Endothelial cell of umbilical vein (primary cell): ENCODE measurements at regions of chr2 and their contacts with region 1.

Region 1: GRCh38 chr2:174748948-174749347 is 15.3 kb downstream of the CHRNA1 start:
- DNase-seq: peak; percentile 66
- H3K4me3 ChIP-seq: no peak overlapping the region
- H3K27ac ChIP-seq: no peak overlapping the region
- H3K4me1 ChIP-seq: no peaks in the 10 kb centered on the region
- H3K27me3 ChIP-seq: peaks cover 0 to 2% of the 10 kb centered on the region in 2 experiments
- CTCF ChIP-seq: peak; percentile 67 to 74
- POLR2A ChIP-seq: no peak

Region 2: GRCh38 chr2:174450021-174450816 is 298.7 kb before region 1 on chr2:
- CTCF ChIA-PET with region 1: no interaction called
- POLR2A ChIA-PET with region 1: no interaction called
- dilution Hi-C with region 1: no loop called
- intact Hi-C with region 1: no loop called
- DNase-seq: peak; percentile 20
- H3K4me3 ChIP-seq: no peak overlapping the region
- H3K27ac ChIP-seq: no peak overlapping the region
- H3K4me1 ChIP-seq: no peaks in the 10 kb centered on the region
- H3K27me3 ChIP-seq: no peaks in the 10 kb centered on the region
- CTCF ChIP-seq: no peak
- POLR2A ChIP-seq: no peak

Region 3: GRCh38 chr2:174738841-174739240 is 10.1 kb before region 1 on chr2:
- CTCF ChIA-PET with region 1: interaction called, 32 read pairs
- POLR2A ChIA-PET with region 1: no interaction called
- dilution Hi-C with region 1: no loop called
- intact Hi-C with region 1: no loop called
- DNase-seq: no peak
- H3K4me3 ChIP-seq: no peak overlapping the region
- H3K27ac ChIP-seq: no peak overlapping the region
- H3K4me1 ChIP-seq: no peaks in the 10 kb centered on the region
- H3K27me3 ChIP-seq: peaks cover 12 to 17% of the 10 kb centered on the region in 2 experiments
- CTCF ChIP-seq: no peak
- POLR2A ChIP-seq: no peak

Region 4: GRCh38 chr2:174787487-174788205 is 38.7 kb after region 1 on chr2:
- CTCF ChIA-PET with region 1: interaction called, 10 read pairs
- POLR2A ChIA-PET with region 1: no interaction called
- dilution Hi-C with region 1: no loop called
- intact Hi-C with region 1: no loop called
- DNase-seq: peak; percentile 30
- H3K4me3 ChIP-seq: no peak overlapping the region
- H3K27ac ChIP-seq: no peak overlapping the region
- H3K4me1 ChIP-seq: peaks cover 13% of the 10 kb centered on the region
- H3K27me3 ChIP-seq: no peaks in the 10 kb centered on the region
- CTCF ChIP-seq: no peak
- POLR2A ChIP-seq: no peak

Region 5: GRCh38 chr2:174878537-174879147 is 129.7 kb after region 1 on chr2:
- CTCF ChIA-PET with region 1: interaction called, 19 read pairs
- POLR2A ChIA-PET with region 1: no interaction called
- dilution Hi-C with region 1: no loop called
- intact Hi-C with region 1: no loop called
- DNase-seq: peak; percentile 82
- H3K4me3 ChIP-seq: peak overlapping the region; percentile 15 to 91 (median 68)
- H3K27ac ChIP-seq: no peak overlapping the region
- H3K4me1 ChIP-seq: peaks cover 7% of the 10 kb centered on the region
- H3K27me3 ChIP-seq: no peaks in the 10 kb centered on the region
- CTCF ChIP-seq: no peak
- POLR2A ChIP-seq: no peak

Region 6: DNA sequence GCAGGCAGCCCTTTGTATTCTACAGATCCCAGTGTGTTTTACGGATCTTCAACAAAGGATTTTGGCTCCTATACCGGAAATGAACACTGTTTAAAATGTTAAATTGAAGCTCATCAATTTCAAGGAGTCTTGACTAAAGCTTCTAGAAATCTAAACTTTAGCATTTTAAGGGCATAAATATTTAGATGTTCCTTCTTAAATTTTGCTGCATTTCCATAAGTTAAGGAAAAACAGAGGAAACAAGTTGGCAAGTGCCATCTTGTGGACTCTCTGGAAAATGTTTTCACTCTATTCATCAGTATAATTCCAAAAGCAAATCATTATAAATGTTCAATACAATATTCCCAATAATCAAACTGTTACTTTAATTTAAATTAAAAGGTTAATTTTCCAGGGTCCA is 236.7 kb after region 1 on chr2:
- CTCF ChIA-PET with region 1: interaction called, 65 read pairs
- POLR2A ChIA-PET with region 1: no interaction called
- dilution Hi-C with region 1: no loop called
- intact Hi-C with region 1: loop called (anchors 1 kb)
- DNase-seq: peak; percentile 55
- H3K4me3 ChIP-seq: no peak overlapping the region
- H3K27ac ChIP-seq: no peak overlapping the region
- H3K4me1 ChIP-seq: no peaks in the 10 kb centered on the region
- H3K27me3 ChIP-seq: no peaks in the 10 kb centered on the region
- CTCF ChIP-seq: peak; percentile 21 to 36
- POLR2A ChIP-seq: no peak

Region 7: DNA sequence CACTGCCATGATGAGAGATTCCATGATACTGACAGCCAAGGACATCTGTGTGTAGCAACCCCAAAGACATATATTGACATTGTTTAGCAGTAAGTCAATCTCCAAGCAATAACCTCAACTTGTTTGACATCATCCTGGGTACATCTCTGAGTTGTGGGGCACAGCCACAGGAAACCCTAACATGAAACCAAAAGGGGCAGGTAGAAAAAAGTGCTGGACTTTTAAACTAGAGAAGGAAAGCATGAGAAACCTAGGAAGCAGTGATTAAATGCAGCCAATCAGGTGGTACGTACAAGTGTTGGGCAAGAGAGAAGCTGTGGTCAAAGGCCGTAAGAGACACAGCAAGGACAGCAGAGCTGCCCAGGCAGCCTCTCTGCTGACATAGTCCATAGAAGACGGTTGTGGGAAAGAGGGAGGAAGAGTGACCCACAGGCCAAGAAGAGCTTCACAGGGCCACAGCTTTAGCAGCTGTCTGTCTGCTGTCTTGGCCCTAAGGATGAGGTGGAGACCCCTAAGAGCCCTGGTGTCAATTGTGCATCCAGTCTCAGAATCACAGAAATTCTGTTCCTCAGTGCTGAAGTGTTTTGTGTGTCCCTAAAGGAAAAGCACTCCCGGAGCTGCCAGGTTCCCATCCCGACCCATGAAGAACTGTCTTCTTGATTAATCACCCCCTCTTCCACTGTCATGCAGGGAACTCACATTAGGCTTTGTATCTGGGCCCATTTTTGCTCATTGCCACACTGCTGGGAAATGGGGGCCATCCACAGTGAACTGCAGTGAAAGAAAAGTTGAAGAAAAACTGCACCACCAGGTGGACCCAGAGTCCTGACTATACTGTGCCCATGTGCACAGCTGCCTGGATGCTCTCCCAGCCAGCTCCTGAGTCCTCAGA is 281.7 kb after region 1 on chr2:
- CTCF ChIA-PET with region 1: interaction called, 16 read pairs
- POLR2A ChIA-PET with region 1: no interaction called
- dilution Hi-C with region 1: no loop called
- intact Hi-C with region 1: no loop called
- DNase-seq: peak; percentile 52
- H3K4me3 ChIP-seq: no peak overlapping the region
- H3K27ac ChIP-seq: no peak overlapping the region
- H3K4me1 ChIP-seq: no peaks in the 10 kb centered on the region
- H3K27me3 ChIP-seq: no peaks in the 10 kb centered on the region
- CTCF ChIP-seq: peak; percentile 24 to 60
- POLR2A ChIP-seq: no peak